ENCODE measurements at regions of chr14 and their contacts with region 1.

Region 1: DNA sequence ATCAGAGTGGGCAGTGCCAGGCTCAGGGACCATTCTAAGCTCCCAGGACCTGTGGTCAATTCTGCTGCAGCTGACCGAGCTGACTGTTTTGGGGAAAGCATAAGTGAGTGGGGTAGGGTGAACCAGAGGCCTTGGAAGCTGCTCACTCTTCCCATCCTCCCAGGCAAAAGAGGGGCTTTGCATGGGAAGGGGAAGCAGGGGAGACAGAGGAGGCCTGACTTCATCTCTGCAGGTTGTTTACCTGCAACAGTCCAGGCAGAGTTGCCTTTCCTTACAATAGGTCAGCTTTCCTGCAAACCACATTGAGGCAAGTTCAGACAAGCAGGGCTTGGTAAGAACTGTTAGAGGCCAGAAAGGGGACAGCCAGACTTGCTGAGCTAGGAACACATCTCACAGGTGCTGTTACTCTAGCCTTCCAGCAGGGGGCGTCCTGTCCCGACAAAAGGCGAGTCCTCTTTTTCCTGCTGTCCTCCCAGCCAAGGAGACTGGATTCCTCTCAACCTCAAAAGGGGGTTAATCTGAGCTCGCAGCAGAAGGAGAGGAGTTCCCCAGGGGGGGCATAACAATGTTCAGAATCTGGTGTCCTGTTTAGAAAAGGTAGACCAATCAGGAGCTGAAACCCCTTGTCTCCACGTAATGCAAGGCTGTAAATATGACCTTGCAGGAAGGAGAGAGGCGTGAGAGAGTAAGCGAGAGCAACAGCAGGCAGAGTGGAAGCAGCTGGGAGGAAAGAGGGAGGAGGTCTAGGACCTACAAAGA is 4.3 kb upstream of the DHRS2 start:
- DNase-seq: peak; percentile 59 to 75 (median 69)
- H3K4me3 ChIP-seq: peak overlapping the region in 1 of 2 donors; percentile 20
- H3K4me3 Mint-ChIP-seq: peak overlapping the region; percentile 8 to 87 (median 66)
- H3K27ac ChIP-seq: no peak overlapping the region
- H3K27ac Mint-ChIP-seq: peak overlapping the region in 5 of 7 donors; percentile 13 to 59 (median 38)
- H3K4me1 ChIP-seq: peaks cover 5% of the 10 kb centered on the region
- H3K4me1 Mint-ChIP-seq: peaks cover 5 to 12% (median 6%) of the 10 kb centered on the region in 4 donors
- H3K27me3 ChIP-seq: no peaks in the 10 kb centered on the region
- H3K27me3 Mint-ChIP-seq: peaks cover 0 to 2% of the 10 kb centered on the region in 2 donors

Region 2: GRCh38 chr14:23366426-23366921 is 265.4 kb before region 1 on chr14:
- CTCF ChIA-PET with region 1: no interaction called
- POLR2A ChIA-PET with region 1: no interaction called
- intact Hi-C with region 1: no loop called
- DNase-seq: no peak
- H3K4me3 ChIP-seq: no peak overlapping the region
- H3K4me3 Mint-ChIP-seq: no peak overlapping the region
- H3K27ac ChIP-seq: no peak overlapping the region
- H3K27ac Mint-ChIP-seq: no peak overlapping the region
- H3K4me1 ChIP-seq: no peaks in the 10 kb centered on the region
- H3K4me1 Mint-ChIP-seq: peaks cover 0 to 2% (median 0%) of the 10 kb centered on the region in 4 donors
- H3K27me3 ChIP-seq: peaks cover 6% of the 10 kb centered on the region
- H3K27me3 Mint-ChIP-seq: peaks cover 21 to 27% of the 10 kb centered on the region in 2 donors

Region 3: DNA sequence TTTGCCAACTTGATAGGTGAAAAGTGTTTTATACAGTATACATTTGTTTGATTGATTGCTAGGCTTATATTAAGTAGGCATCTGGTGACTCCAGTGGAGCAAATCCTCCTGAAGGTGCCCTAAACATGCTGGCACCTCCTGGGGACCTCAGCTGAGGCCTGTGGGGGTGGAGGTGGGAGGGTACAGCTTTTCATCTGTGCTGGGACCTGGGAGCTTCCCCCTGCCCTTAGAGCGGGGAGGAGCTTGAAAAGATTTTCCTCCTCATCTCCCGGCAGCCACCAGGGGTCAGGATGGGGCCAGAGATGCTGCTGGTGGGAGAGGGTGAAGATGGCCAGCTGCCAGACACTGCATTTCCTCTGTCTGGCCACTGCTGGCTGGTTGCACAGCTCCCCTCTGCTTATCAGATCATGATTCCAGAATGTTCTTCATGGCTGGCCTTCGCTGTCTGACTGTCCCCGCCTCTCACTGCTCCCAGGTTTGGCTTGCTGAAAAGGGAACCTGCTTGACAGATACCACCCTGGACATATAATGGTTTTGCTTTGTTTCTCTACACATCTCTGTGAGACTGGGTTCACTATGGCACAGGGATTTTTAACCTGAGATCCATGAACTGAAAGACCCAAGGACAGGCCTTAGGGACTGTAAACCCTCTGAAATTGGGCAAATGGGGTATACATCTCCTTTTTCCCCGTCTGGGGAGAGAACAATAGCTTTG is 42.8 kb before region 1 on chr14:
- CTCF ChIA-PET with region 1: interaction called, 68 read pairs
- POLR2A ChIA-PET with region 1: no interaction called
- intact Hi-C with region 1: loop called (anchors 1 kb)
- DNase-seq: peak; percentile 77 to 80 (median 78)
- H3K4me3 ChIP-seq: no peak overlapping the region
- H3K4me3 Mint-ChIP-seq: peak overlapping the region in 1 of 8 donors; percentile 46
- H3K27ac ChIP-seq: no peak overlapping the region
- H3K27ac Mint-ChIP-seq: peak overlapping the region in 1 of 7 donors; percentile 50
- H3K4me1 ChIP-seq: peaks cover 4% of the 10 kb centered on the region
- H3K4me1 Mint-ChIP-seq: peaks cover 4 to 11% (median 6%) of the 10 kb centered on the region in 4 donors
- H3K27me3 ChIP-seq: no peaks in the 10 kb centered on the region
- H3K27me3 Mint-ChIP-seq: peaks cover 7 to 16% of the 10 kb centered on the region in 2 donors

Region 4: DNA sequence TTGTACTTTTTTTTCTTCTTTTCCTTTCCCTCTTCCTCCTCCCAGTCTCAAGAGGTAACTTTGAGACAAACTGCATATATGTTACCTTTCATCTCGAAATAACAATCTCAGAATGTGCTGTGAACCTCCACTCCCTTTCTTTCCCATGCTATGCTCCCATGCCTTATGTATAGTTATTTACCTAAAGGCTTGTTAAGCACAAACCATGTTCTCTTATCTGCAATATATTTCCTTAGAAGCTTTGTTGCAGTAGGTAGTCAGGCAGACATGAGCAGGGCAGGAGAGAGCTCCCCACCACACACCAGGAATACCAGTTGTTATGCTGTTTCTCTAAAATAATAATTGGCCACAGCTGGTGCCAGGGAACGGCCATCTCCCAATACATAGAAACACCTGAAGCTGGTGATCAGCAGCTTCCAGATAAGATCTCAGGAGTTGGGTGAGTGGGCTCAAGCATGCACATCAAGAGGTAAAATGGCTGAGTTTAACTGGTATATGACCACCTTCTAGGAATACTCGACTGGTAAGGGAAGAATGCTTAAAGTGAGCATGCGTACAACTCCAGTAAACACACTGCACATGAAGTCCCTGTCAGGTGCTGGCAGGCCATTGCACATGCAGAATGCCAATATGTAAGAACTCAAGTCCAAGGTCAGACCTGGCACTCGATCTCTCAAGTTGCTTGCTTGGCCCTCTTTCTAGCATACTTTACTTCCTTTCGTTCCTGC is 10.5 kb before region 1 on chr14:
- CTCF ChIA-PET with region 1: interaction called, 22 read pairs
- POLR2A ChIA-PET with region 1: no interaction called
- intact Hi-C with region 1: no loop called
- DNase-seq: no peak
- H3K4me3 ChIP-seq: no peak overlapping the region
- H3K4me3 Mint-ChIP-seq: peak overlapping the region in 1 of 8 donors; percentile 37
- H3K27ac ChIP-seq: no peak overlapping the region
- H3K27ac Mint-ChIP-seq: no peak overlapping the region
- H3K4me1 ChIP-seq: no peaks in the 10 kb centered on the region
- H3K4me1 Mint-ChIP-seq: no peaks in the 10 kb centered on the region
- H3K27me3 ChIP-seq: no peaks in the 10 kb centered on the region
- H3K27me3 Mint-ChIP-seq: peaks cover 6 to 12% of the 10 kb centered on the region in 2 donors

Region 5: DNA sequence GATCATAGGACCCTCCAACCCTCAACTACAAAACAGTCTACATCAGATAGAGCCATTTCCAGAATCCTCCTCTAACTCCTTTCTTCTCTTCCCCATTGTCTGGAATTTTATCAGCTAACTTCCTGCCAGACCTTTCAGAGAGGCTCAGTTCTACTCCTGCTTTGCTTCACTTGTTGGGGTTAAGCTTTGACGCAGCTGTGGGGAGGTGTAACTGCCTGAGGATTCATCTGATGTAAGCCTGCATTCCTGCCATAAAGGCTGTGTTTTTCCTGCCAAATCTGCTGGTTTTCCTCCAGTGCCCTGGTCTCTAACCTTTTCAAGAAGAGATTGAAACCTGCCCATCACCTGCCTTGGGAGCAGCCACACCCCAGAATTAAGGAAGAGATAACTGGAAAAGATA is 21.2 kb after region 1 on chr14:
- CTCF ChIA-PET with region 1: interaction called, 45 read pairs
- POLR2A ChIA-PET with region 1: no interaction called
- intact Hi-C with region 1: no loop called
- DNase-seq: no peak
- H3K4me3 ChIP-seq: no peak overlapping the region
- H3K4me3 Mint-ChIP-seq: no peak overlapping the region
- H3K27ac ChIP-seq: no peak overlapping the region
- H3K27ac Mint-ChIP-seq: no peak overlapping the region
- H3K4me1 ChIP-seq: no peaks in the 10 kb centered on the region
- H3K4me1 Mint-ChIP-seq: no peaks in the 10 kb centered on the region
- H3K27me3 ChIP-seq: no peaks in the 10 kb centered on the region
- H3K27me3 Mint-ChIP-seq: peaks cover 2 to 3% of the 10 kb centered on the region in 2 donors

Region 6: GRCh38 chr14:23910101-23910875 is 278.4 kb after region 1 on chr14:
- CTCF ChIA-PET with region 1: interaction called, 27 read pairs
- POLR2A ChIA-PET with region 1: no interaction called
- intact Hi-C with region 1: no loop called
- DNase-seq: peak in 1 of 5 donors; percentile 2
- H3K4me3 ChIP-seq: no peak overlapping the region
- H3K4me3 Mint-ChIP-seq: no peak overlapping the region
- H3K27ac ChIP-seq: no peak overlapping the region
- H3K27ac Mint-ChIP-seq: no peak overlapping the region
- H3K4me1 ChIP-seq: no peaks in the 10 kb centered on the region
- H3K4me1 Mint-ChIP-seq: no peaks in the 10 kb centered on the region
- H3K27me3 ChIP-seq: no peaks in the 10 kb centered on the region
- H3K27me3 Mint-ChIP-seq: peaks cover 6 to 29% of the 10 kb centered on the region in 2 donors

Region 7: DNA sequence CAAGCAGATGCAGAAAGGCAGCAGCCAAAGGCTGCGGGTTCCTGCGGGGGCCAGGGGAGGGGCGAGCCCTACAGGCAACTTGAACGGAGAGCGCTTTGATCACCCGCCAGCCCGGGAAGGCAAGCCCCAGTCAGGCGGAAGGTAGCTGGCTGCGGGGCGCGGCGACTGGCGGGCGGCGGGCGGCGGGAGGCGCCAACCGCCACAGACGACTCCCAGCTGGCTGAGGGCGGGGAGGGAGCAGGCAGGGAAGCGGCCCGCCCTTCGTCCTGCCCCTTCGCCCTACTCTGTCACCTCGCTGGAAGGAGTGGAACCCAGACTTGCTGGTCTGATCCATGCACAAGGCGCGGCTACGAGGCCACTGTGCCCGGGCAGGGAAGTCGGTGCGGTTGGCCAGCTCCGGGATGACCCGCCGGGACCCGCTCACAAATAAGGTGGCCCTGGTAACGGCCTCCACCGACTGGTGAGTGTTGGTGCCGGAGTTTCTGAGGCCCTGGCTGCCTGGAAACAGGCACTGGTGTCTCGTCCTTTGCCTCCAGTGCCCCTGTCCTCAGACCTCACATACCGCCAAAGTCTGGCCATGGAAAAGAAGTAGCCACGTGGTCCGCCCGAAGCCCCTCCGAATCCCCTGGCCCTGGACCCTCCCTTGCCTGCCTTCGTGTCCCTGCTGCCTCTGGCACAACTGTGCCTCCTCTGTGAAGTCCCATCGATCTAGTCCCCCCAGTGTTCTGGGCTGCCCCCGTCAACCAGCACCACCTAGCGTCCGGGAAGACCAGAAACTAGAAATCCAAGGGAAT is 404.5 kb after region 1 on chr14:
- CTCF ChIA-PET with region 1: no interaction called
- POLR2A ChIA-PET with region 1: no interaction called
- intact Hi-C with region 1: loop called (anchors 5 kb)
- DNase-seq: peak; percentile 53 to 77 (median 66)
- H3K4me3 ChIP-seq: peak overlapping the region; percentile 47 to 73
- H3K4me3 Mint-ChIP-seq: peak overlapping the region; percentile 87 to 100 (median 96)
- H3K27ac ChIP-seq: peak overlapping the region; percentile 67
- H3K27ac Mint-ChIP-seq: peak overlapping the region; percentile 79 to 94 (median 88)
- H3K4me1 ChIP-seq: peaks cover 3% of the 10 kb centered on the region
- H3K4me1 Mint-ChIP-seq: peaks cover 5 to 15% (median 8%) of the 10 kb centered on the region in 4 donors
- H3K27me3 ChIP-seq: no peaks in the 10 kb centered on the region
- H3K27me3 Mint-ChIP-seq: no peaks in the 10 kb centered on the region

Measured in CD4-positive, alpha-beta memory T cell (primary cell).